Vagina (tissue), 2 donors: ENCODE measurements at regions of chr19 and their contacts with region 1.

Region 1: DNA sequence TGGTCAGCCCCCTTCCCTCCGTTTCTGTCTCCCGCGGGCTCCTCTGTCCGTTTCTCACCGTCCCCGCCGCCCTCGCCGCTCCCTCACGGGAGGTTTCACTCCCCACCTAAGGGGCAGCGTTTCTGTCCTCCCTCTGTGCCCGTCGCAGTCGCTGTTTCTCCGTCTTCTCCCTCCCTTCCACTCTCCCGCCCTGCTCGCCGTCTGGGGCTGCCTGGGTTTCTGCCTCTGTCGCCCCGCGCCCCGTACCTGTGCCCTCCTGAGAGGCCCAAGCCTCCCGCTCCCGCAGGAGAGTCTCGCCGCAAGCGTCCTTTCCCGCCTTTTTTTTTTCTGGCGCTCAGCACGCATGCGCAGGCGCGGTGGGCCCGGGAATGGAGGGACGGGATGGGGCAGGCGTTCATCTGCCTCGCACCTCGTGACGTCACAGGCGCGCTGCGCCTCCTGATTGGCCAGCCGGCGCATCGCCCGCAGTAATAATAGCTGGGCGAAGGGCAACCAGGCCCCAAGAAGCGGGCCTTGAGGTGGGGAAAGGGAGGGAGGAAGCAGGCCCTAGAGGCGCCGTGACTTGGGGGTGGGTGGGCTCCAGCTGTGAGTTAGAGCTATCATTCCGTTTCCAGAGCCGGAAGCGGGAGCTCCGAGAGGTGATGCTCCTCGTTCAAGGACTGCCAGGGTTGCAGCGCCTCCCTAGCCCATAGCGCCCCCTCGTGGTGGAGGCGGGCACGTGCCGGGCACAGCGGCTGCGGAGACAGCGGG is 15.4 kb downstream of the SSC5D start:
- DNase-seq: no peak
- H3K4me3 ChIP-seq: peak overlapping the region; percentile 38 to 60
- H3K27ac ChIP-seq: peak overlapping the region; percentile 54
- H3K4me1 ChIP-seq: peaks cover 10% of the 10 kb centered on the region
- H3K27me3 ChIP-seq: no peaks in the 10 kb centered on the region
- CTCF ChIP-seq: peak; percentile 96 to 98 (median 97)
- POLR2A ChIP-seq: no peak

Region 2: GRCh38 chr19:55146078-55146704 is 357.5 kb before region 1 on chr19:
- intact Hi-C with region 1: loop called (anchors 10 kb)
- DNase-seq: no peak
- H3K4me3 ChIP-seq: peak overlapping the region; percentile 6 to 22
- H3K27ac ChIP-seq: no peak overlapping the region
- H3K4me1 ChIP-seq: peaks cover 9% of the 10 kb centered on the region
- H3K27me3 ChIP-seq: peaks cover 4% of the 10 kb centered on the region
- CTCF ChIP-seq: no peak
- POLR2A ChIP-seq: no peak

Region 3: GRCh38 chr19:55301459-55302317 is 202.0 kb before region 1 on chr19:
- intact Hi-C with region 1: loop called (anchors 10 kb)
- DNase-seq: no peak
- H3K4me3 ChIP-seq: peak overlapping the region; percentile 5 to 43
- H3K27ac ChIP-seq: no peak overlapping the region
- H3K4me1 ChIP-seq: peaks cover 6% of the 10 kb centered on the region
- H3K27me3 ChIP-seq: no peaks in the 10 kb centered on the region
- CTCF ChIP-seq: peak; percentile 93 to 97 (median 96)
- POLR2A ChIP-seq: no peak

Region 4: DNA sequence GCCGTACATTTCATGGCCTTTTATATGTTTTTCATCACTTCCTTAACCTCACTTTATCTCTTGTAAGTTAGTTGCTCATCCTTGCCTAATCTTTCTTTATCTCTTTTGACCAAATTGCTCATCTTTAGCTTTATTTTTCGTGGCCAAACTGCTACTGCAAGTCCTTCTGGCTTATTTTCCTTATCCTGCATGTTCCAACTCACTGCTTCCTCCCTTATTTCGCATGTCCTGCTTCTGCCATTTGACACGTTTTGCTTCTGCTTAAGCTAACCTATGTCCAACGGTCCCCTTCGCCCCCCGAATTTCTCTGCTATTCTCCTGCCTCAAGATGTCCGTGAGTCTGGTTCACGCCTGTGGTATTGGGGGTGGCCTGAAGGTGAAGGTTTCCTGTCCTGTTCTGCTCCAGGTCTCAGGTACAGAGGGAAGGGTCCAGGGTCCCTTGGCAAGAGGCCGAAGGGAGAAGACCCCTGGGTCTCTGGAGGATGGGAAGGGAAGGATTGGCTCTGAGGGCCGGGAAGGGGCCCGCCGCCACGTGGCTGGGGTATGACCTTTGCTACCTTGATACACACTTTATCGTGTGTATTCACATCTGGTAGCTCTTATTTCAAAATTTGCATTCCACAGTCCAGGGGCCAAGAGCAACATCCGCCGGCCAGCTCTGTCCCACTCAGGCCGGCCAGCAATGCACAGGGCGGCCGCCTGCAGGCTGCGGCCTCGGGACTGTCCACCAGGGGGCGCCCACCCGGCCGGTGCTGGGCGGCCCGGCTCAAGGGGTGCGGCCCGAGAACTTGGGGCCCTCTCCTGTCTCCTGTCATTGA is 36.2 kb before region 1 on chr19:
- intact Hi-C with region 1: loop called (anchors 5 kb)
- DNase-seq: no peak
- H3K4me3 ChIP-seq: no peak overlapping the region
- H3K27ac ChIP-seq: no peak overlapping the region
- H3K4me1 ChIP-seq: peaks cover 12% of the 10 kb centered on the region
- H3K27me3 ChIP-seq: no peaks in the 10 kb centered on the region
- CTCF ChIP-seq: peak; percentile 80 to 98 (median 95)
- POLR2A ChIP-seq: no peak

Region 5: DNA sequence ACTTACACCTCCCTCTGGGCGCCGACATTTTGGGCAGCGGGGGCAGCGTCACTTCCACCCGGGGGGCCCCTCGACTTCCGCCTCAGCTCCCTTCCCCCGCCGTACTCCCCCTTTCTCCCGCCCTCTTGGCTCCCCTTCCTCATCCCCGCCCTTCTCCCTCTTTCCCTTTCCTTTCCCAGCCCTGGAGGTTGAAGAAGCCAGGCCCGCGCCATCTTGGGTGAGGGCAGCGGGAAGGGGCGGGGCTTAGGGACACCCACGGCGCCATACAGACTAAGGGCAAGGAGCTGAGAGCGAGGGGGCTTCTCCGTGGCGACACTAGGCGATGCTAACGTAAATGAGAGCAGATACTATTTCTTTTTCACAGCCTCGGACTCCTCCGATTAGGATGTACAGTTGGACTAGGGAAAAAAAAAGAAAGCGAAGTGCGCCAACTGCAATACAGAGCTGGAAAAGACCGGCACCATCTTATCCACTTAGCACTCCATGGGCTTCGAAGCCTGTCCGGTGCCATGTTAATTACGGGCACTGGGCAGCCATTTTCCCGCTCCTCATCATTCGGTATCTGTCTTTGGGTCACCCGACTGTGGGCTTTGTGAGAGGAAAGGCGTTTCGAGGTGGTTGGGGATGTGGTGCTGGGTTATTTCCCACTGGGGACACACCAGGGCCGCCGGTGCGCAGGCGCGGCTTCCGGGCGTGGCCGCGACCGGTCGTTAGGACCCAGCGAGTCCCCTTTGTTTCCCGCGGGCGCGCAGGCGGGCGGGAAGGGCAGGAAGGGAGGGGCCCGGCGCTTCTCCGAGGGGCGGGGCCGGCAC is 96.0 kb after region 1 on chr19 and contains the start of gene FIZ1:
- intact Hi-C with region 1: no loop called
- DNase-seq: peak in 1 of 2 donors; percentile 99
- H3K4me3 ChIP-seq: peak within 1 kb of the TSS; percentile 60 to 72
- H3K27ac ChIP-seq: peak within 1 kb of the TSS; percentile 95
- H3K4me1 ChIP-seq: peaks cover 20% of the 10 kb centered on the region
- H3K27me3 ChIP-seq: no peaks in the 10 kb centered on the region
- CTCF ChIP-seq: no peak
- POLR2A ChIP-seq: peak in 1 of 2 donors; percentile 27
- total RNA-seq, gene FIZ1: 5.4 TPM

Region 6: DNA sequence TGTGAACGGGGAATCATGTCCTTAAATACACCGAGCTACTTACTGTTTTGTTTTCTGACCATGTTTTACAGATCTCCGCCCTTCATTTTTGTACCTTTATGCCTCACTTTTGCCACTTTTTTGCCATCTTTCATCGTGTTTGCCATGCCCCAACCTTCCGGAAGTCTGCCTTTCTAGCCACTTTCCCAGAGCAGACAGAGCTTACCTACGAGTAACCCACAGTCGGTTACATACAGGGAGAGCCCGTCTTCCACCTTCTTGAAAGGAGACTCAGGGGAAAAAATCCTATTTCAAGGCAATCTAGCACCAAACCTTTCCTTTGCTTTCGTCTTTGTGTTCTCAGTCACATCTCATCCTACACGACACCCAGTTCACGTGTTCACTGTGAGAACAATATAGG is 291.3 kb after region 1 on chr19:
- intact Hi-C with region 1: no loop called
- DNase-seq: no peak
- H3K4me3 ChIP-seq: no peak overlapping the region
- H3K27ac ChIP-seq: no peak overlapping the region
- H3K4me1 ChIP-seq: no peaks in the 10 kb centered on the region
- H3K27me3 ChIP-seq: no peaks in the 10 kb centered on the region
- CTCF ChIP-seq: no peak
- POLR2A ChIP-seq: no peak